ENCODE measurements at regions of chr12 and their contacts with region 1.

Region 1: DNA sequence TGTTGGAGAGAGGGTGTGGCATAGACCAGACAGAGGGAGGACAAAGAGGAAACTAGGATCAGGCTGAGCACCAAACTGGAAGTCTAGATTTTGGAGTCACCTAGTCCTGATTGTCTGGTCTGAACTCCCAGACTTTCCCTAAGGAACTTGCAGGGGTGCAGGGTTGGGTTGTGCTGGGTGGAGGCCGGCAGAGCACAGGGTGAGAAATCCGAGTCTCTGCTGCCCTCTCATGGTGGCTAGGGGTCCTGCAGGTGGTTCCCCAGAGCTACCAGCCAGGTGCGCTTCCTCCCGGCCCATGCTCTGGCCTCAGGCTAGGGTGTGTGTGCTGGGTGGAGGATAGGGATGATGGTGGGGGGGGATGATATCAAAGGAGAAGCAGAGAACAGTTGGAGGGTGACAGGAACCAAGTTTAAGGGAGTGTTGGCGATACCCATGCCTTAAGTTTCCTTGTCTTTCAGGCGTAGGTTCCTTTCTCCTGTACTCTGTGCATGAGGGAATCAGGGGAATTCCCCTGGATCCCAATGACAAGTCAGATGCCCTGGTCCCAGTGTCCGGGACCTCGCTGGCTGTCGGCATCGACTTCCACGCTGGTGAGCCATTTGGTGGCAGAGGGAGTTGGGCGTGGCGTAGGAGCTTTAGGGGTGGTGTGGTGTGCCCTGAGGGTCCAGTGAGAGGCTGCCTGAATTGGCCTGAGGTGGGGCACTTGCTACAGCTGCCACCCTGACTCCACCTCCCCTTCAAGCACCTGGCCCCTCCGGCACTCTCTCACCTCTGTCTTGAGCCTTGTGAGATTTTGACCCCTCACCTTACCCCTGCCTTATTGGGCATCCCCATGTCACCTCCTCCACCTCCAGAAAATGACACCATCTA is 33.4 kb upstream of the NXPH4 start:
- DNase-seq: peak; percentile 63 to 88 (median 86)
- ATAC-seq: peak; percentile 72 to 75
- H3K4me3 ChIP-seq: no peak overlapping the region
- H3K27ac ChIP-seq: no peak overlapping the region
- H3K4me1 ChIP-seq: no peaks in the 10 kb centered on the region
- H3K27me3 ChIP-seq: no peaks in the 10 kb centered on the region

Region 2: GRCh38 chr12:56957229-56957939 is 225.8 kb before region 1 on chr12 and contains the start of gene RDH16:
- intact Hi-C with region 1: no loop called
- DNase-seq: no peak
- ATAC-seq: no peak
- H3K4me3 ChIP-seq: no peak within 1 kb of the TSS
- H3K27ac ChIP-seq: no peak within 1 kb of the TSS
- H3K4me1 ChIP-seq: no peaks in the 10 kb centered on the region
- H3K27me3 ChIP-seq: no peaks in the 10 kb centered on the region
- total RNA-seq, gene RDH16: 0.06 to 0.31 (median 0.26) TPM

Region 3: DNA sequence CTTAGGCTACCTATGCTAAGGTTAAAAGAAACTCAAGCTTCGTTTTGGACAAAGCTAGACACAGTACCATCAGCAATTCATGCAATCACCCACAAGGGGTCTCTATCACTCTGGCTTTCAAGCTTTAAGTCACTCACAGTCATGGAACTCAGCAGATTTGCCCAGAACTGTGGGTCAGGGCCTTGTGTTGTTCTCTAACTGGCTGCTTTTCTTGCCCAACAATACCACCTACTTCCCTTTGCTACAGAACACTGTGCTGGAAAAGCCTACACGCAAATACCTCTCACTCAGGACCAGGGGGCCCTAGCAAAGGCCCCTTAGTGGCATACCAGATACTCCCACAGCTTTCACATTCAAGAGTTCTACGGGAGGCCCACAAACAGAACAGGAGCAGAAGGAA is 113.6 kb before region 1 on chr12:
- intact Hi-C with region 1: loop called in 3 of 4 experiments (anchors 5 to 10 kb)
- DNase-seq: peak in 2 of 3 donors; percentile 41 to 65
- ATAC-seq: peak; percentile 92 to 93
- H3K4me3 ChIP-seq: no peak overlapping the region
- H3K27ac ChIP-seq: peak overlapping the region; percentile 57
- H3K4me1 ChIP-seq: no peaks in the 10 kb centered on the region
- H3K27me3 ChIP-seq: no peaks in the 10 kb centered on the region

Region 4: DNA sequence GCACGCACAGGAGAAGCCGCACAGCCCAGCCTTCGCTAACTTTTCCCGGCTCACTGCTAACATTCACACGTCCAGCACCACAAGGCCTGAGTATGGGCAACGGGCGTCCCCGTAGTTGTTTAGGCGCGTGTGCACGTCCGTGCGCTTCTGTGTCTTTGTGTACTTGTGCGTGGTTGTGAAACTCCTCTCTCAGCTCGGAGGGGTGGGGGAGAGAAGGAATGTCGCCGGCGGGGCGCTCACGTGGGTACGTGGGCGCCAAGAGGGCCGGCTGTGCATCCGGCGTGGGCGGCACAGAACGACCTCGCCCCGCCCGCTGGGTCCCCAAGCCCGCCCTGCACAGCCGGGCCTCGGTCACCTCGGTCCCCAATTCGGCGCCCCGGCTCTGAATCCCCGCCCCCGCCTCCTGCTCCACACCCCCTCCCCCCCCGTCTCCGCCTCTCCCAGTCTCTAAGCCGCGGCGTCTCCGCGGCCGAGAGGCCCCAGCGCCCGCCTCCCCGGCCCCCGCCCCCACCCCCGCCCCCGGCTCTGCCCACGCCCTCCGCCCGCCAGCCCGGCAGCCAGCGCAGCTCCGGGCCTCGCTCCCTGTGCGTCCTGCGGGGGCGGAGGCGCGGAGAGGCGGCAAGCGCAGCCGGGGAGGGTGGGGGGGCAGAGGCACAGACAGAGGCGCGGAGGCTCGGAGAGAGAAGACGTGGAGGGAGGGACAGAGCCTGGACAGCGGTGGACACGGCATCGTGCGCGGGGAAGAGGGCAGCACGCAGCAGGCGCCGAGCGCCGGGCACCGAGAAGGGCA is 94.5 kb before region 1 on chr12 and contains the start of gene NAB2:
- intact Hi-C with region 1: no loop called
- DNase-seq: peak; percentile 97 to 99 (median 99)
- ATAC-seq: peak; percentile 78 to 85
- H3K4me3 ChIP-seq: peak within 1 kb of the TSS; percentile 78
- H3K27ac ChIP-seq: peak within 1 kb of the TSS; percentile 100
- H3K4me1 ChIP-seq: peaks cover 4% of the 10 kb centered on the region
- H3K27me3 ChIP-seq: no peaks in the 10 kb centered on the region
- total RNA-seq, gene NAB2: 12.8 to 22.7 (median 14.7) TPM

Region 5: GRCh38 chr12:57124259-57124877 is 58.8 kb before region 1 on chr12:
- intact Hi-C with region 1: loop called (anchors 2 to 5 kb)
- DNase-seq: peak; percentile 56 to 83 (median 69)
- ATAC-seq: peak in 1 of 2 donors; percentile 42
- H3K4me3 ChIP-seq: no peak overlapping the region
- H3K27ac ChIP-seq: no peak overlapping the region
- H3K4me1 ChIP-seq: no peaks in the 10 kb centered on the region
- H3K27me3 ChIP-seq: no peaks in the 10 kb centered on the region

Region 6: GRCh38 chr12:57242693-57243454 is 59.7 kb after region 1 on chr12:
- intact Hi-C with region 1: no loop called
- DNase-seq: peak; percentile 54 to 81 (median 80)
- ATAC-seq: peak in 1 of 2 donors; percentile 1
- H3K4me3 ChIP-seq: peak overlapping the region; percentile 37
- H3K27ac ChIP-seq: no peak overlapping the region
- H3K4me1 ChIP-seq: peaks cover 2% of the 10 kb centered on the region
- H3K27me3 ChIP-seq: no peaks in the 10 kb centered on the region